ENCODE measurements at regions of chr4 and their contacts with region 1.

Region 1: DNA sequence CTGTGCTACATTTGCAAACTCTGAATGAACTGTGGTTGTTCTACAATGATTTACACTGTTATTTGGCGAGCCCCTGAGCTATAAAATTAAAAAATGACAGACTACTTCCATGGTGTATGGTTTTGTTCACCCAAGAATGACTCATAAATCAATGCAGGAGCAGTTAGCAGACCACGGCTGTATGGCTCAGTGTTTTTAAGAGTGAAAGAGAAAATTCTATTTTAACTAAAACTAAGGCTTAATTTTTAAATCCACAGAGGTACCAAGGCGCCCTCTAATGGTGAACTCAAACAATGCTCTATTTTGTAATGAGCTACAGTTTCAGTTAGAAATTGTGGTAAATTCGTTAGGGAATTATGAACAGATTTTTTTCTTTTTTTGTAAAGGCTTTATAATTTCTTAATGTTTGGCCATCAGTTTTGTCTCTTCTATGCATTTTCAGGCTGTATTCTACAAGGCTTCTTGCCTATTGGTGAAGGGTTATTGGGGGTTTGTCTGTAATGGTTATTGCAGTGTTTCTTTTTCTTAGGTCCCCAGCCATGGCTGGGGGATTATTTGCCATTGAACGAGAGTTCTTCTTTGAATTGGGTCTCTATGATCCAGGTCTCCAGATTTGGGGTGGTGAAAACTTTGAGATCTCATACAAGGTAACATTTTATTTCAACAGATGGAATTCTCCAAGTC is 32.5 kb downstream of the HMGB2 start:
- DNase-seq: peak; percentile 16
- H3K4me3 ChIP-seq: no peak overlapping the region
- H3K27ac ChIP-seq: no peak overlapping the region
- H3K27me3 ChIP-seq: no peaks in the 10 kb centered on the region
- CTCF ChIP-seq: peak; percentile 74

Region 2: GRCh38 chr4:173025131-173025530 is 276.5 kb before region 1 on chr4:
- CTCF ChIA-PET with region 1: interaction called, 46 read pairs
- POLR2A ChIA-PET with region 1: no interaction called
- DNase-seq: peak; percentile 65
- H3K4me3 ChIP-seq: no peak overlapping the region
- H3K27ac ChIP-seq: no peak overlapping the region
- H3K27me3 ChIP-seq: peaks cover 7% of the 10 kb centered on the region
- CTCF ChIP-seq: peak; percentile 79

Region 3: DNA sequence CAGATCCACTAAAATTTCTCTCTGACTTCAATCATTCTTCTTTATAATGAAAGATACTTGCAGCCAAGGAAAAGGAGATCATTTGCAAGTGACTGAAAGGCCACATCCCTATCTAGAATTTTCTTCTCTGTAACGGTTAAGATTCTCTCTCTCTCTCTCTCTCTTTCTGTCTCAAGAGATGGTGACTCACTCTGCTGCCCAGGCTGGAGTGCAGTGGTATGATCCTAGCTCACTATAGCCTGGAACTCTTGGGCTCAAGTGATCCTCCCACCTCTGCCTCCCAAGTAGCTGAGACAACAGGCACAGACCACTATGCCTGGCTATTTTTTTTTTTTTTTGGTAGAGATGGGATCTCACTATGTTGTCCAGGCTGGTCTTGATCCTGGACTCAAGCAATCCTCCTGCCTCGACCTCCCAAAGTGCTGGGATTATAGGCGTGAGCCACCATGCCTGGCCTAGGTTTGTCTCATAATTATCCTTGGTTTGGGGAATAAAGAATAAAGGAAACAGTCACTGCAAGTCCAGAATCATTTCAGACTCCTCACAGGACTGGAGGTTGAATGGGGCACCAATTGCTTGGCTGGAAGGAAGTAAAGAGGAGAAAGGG is 166.3 kb before region 1 on chr4:
- CTCF ChIA-PET with region 1: no interaction called
- POLR2A ChIA-PET with region 1: no interaction called
- DNase-seq: no peak
- H3K4me3 ChIP-seq: no peak overlapping the region
- H3K27ac ChIP-seq: no peak overlapping the region
- H3K27me3 ChIP-seq: no peaks in the 10 kb centered on the region
- CTCF ChIP-seq: no peak

Region 4: GRCh38 chr4:173270312-173271027 is 31.2 kb before region 1 on chr4:
- CTCF ChIA-PET with region 1: interaction called, 56 read pairs
- POLR2A ChIA-PET with region 1: no interaction called
- DNase-seq: no peak
- H3K4me3 ChIP-seq: no peak overlapping the region
- H3K27ac ChIP-seq: no peak overlapping the region
- H3K27me3 ChIP-seq: no peaks in the 10 kb centered on the region
- CTCF ChIP-seq: no peak

Region 5: GRCh38 chr4:173288296-173288695 is 13.4 kb before region 1 on chr4:
- CTCF ChIA-PET with region 1: interaction called, 61 read pairs
- POLR2A ChIA-PET with region 1: no interaction called
- DNase-seq: peak; percentile 6
- H3K4me3 ChIP-seq: no peak overlapping the region
- H3K27ac ChIP-seq: no peak overlapping the region
- H3K27me3 ChIP-seq: no peaks in the 10 kb centered on the region
- CTCF ChIP-seq: peak; percentile 52

Region 6: GRCh38 chr4:173370477-173371291 is 69.0 kb after region 1 on chr4 and contains the start of gene SAP30:
- CTCF ChIA-PET with region 1: interaction called, 14 read pairs
- POLR2A ChIA-PET with region 1: no interaction called
- DNase-seq: peak; percentile 96
- H3K4me3 ChIP-seq: peak within 1 kb of the TSS; percentile 94
- H3K27ac ChIP-seq: peak within 1 kb of the TSS; percentile 87
- H3K27me3 ChIP-seq: no peaks in the 10 kb centered on the region
- CTCF ChIP-seq: no peak
- polyA plus RNA-seq, gene SAP30: 14.4 and 22.7 TPM in 2 replicates